Breast epithelium (tissue), 4 donors: ENCODE measurements at regions of chr11 and their contacts with region 1.

Region 1: GRCh38 chr11:73612601-73613140 is 14.8 kb upstream of the FAM168A start:
- DNase-seq: no peak
- H3K4me3 ChIP-seq: no peak overlapping the region
- H3K27ac ChIP-seq: no peak overlapping the region
- H3K4me1 ChIP-seq: no peaks in the 10 kb centered on the region
- H3K27me3 ChIP-seq: no peaks in the 10 kb centered on the region
- CTCF ChIP-seq: no peak
- POLR2A ChIP-seq: no peak

Region 2: DNA sequence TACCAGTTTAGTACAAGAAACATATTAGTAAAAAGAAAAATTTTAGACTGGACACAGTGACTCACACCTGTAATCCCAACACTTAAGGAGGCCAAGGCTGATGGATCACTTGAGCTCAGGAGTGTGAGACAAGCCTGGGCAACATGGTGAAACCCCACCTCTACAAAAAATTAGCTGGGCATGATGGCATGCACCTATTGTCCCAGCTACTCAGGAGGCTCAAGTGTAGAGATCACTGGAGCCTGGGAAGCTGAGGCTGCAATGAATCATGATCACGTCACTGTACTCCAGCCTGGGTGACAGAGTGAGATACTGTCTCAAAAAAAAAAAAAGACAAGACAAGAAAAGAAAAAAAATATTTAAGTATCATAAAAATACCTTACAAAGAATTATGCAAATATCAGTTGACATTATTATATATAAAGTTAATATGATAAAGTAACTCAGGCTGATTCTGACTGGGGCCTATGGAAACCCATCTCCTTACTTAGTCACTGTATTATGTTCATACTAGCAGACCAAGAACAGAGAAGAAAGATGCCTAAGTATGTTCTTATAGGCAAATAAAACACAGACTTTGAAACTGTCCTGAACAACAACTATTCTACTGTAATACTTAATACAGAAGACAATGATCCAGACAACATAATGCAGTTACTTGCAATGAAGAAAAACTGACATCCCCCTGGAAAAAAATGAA is 42.1 kb before region 1 on chr11:
- intact Hi-C with region 1: no loop called
- DNase-seq: no peak
- H3K4me3 ChIP-seq: no peak overlapping the region
- H3K27ac ChIP-seq: no peak overlapping the region
- H3K4me1 ChIP-seq: no peaks in the 10 kb centered on the region
- H3K27me3 ChIP-seq: no peaks in the 10 kb centered on the region
- CTCF ChIP-seq: no peak
- POLR2A ChIP-seq: no peak

Region 3: DNA sequence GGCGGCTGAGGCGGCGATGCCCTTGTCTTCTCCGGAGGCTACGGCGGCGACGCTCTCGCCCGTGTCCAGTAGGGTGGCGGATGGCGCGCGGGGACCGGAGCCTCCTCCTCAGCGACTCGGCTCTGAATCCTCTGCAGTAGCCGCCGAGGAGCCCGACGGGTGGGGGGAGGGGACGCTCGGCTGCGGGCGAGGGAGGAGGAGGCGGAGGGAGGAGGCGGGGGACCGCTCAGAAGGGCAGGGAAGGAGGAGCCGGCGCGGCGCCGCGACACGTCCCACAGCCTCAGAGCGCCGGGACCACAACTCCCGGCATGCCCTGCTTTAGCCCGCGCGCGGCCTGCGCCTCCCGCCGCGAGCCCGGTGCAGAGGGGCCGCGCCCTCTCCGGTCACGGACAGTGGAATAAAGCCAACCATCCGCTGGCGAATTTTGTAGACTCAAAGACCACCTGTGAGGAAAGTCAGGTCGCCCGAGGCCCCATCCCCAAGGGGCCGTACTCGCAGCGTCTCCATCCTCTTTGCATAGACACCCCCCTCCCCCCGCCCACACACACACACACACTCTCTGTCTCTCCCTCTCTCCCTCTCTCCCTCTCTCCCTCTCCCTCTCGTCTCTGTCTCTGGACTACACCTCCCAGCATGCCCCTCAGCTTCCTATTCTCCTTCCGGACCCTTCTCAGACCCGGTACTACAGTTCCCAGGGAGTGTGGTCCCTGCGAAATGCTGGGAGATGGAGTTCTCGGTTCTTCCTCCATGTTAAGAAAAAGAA is 14.5 kb before region 1 on chr11 and contains the start of gene FAM168A:
- intact Hi-C with region 1: loop called (anchors 2 kb)
- DNase-seq: peak; percentile 92 to 93
- H3K4me3 ChIP-seq: peak within 1 kb of the TSS; percentile 77 to 84 (median 82)
- H3K27ac ChIP-seq: peak within 1 kb of the TSS; percentile 77 to 87
- H3K4me1 ChIP-seq: no peaks in the 10 kb centered on the region
- H3K27me3 ChIP-seq: no peaks in the 10 kb centered on the region
- CTCF ChIP-seq: peak; percentile 24 to 60 (median 41)
- POLR2A ChIP-seq: peak; percentile 32
- total RNA-seq, gene FAM168A: 26.5 to 41.9 (median 28.8) TPM